GM10248 (cell line): ENCODE measurements at regions of chr7 and their contacts with region 1.

Region 1: DNA sequence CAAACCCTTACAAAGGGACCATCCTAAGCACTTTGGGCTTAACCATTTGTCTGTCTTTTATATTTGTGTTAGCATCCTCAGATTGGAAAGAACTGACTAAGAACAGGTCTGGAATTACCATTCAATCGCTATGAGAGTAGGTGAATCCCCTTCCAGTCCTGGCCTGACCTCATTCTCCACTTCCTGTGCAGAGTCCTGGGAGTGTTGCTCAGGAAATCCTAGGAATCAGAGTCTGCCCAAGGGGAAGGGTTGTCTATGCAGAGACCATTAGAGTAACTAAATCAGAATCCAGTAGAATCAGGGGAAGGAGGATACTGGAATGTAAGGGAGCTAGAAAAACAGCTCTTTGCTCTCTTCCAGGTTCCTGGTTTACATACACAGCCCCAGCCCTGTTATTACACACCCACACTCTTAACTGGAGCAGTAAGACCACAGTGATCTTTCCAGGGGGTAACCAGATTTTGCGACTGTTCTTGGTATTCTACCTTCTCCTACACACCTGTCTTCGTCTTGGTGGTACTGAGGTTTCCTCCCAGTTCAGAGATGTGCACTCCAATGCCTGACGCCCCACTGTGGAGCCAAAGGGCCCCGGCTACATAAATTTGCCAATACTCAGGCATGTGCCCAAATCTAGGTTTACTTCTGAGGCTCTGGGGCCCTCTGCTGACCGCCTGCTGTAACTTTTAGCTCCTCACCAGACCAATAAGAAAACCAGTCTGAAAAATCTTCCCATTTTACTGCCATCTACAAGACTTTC is 103.7 kb downstream of the RNF216 start:
- DNase-seq: peak; percentile 48
- CTCF ChIP-seq: peak; percentile 70

Region 2: GRCh38 chr7:5694912-5695726 is 17.4 kb after region 1 on chr7:
- CTCF ChIA-PET with region 1: interaction called, 104 read pairs
- POLR2A ChIA-PET with region 1: interaction called, 9 read pairs
- DNase-seq: peak; percentile 62
- CTCF ChIP-seq: no peak

Region 3: GRCh38 chr7:5704534-5704922 is 26.8 kb after region 1 on chr7:
- CTCF ChIA-PET with region 1: interaction called, 104 read pairs
- POLR2A ChIA-PET with region 1: interaction called, 3 read pairs
- DNase-seq: peak; percentile 67
- CTCF ChIP-seq: peak; percentile 88

Region 4: DNA sequence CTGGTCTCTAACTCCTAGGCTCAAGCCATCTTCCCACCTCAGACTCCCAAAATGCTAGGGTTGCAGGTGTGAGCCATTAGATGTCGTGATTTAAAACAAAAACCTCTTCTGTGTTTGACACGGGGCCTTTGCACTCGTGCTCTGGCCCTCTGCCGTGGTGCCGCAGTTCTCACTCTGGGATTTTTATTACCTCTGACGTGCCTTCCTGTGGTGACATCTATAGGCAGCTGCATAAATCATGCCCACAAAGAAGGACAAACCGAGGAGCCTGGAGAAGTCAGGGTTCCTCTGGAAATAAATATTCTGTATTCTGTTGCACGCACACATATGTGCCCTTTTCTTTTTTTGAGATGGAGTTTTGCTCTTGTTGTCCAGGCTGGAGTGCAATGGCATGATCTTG is 177.0 kb after region 1 on chr7:
- CTCF ChIA-PET with region 1: no interaction called
- POLR2A ChIA-PET with region 1: no interaction called
- DNase-seq: no peak
- CTCF ChIP-seq: no peak